Lower lobe of right lung (tissue), 2 donors: ENCODE measurements at regions of chr13 and their contacts with region 1.

Region 1: GRCh38 chr13:75479102-75479740 is 2.7 kb downstream of the TBC1D4 start:
- DNase-seq: no peak
- ATAC-seq: no peak
- H3K4me3 ChIP-seq: peak overlapping the region; percentile 88
- H3K27ac ChIP-seq: no peak overlapping the region
- H3K4me1 ChIP-seq: peaks cover 25% of the 10 kb centered on the region
- H3K27me3 ChIP-seq: no peaks in the 10 kb centered on the region
- CTCF ChIP-seq: no peak

Region 2: DNA sequence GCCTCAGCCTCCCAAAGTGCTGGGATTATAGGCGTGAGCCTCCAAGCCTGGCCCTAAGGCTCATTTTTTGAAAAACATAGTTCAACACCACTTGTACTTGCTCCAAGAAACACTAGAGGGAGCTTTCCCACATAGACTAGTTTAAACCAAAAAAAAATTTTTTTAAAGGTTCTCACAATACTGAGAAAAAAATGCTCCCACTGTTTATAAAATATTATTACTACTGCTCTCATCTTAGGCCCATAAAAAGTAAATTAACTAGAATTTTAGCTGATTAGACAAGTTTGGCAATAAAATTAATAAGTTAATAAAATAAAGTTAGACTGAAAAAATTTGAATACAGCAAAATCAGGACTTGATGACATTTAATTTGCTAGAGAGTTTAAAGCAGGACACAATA is 106.7 kb before region 1 on chr13:
- intact Hi-C with region 1: loop called (anchors 10 kb)
- DNase-seq: no peak
- ATAC-seq: peak; percentile 75 to 80
- H3K4me3 ChIP-seq: no peak overlapping the region
- H3K27ac ChIP-seq: no peak overlapping the region
- H3K4me1 ChIP-seq: peaks cover 27% of the 10 kb centered on the region
- H3K27me3 ChIP-seq: no peaks in the 10 kb centered on the region
- CTCF ChIP-seq: peak; percentile 76